Naive thymus-derived CD4-positive, alpha-beta T cell (primary cell): ENCODE measurements at regions of chr19 and their contacts with region 1.

Region 1: GRCh38 chr19:16584248-16585141 is 12.3 kb upstream of the SLC35E1 start:
- DNase-seq: peak; percentile 68 to 93 (median 86)
- ATAC-seq: peak; percentile 89
- H3K4me3 ChIP-seq: peak overlapping the region; percentile 26
- H3K4me3 Mint-ChIP-seq: peak overlapping the region; percentile 70 to 90 (median 78)
- H3K27ac ChIP-seq: peak overlapping the region; percentile 62
- H3K27ac Mint-ChIP-seq: peak overlapping the region; percentile 82 to 95 (median 90)
- H3K4me1 ChIP-seq: peaks cover 65% of the 10 kb centered on the region in 2 donors
- H3K4me1 Mint-ChIP-seq: peaks cover 49 to 90% (median 77%) of the 10 kb centered on the region in 7 donors
- H3K27me3 ChIP-seq: no peaks in the 10 kb centered on the region
- H3K27me3 Mint-ChIP-seq: no peaks in the 10 kb centered on the region

Region 2: DNA sequence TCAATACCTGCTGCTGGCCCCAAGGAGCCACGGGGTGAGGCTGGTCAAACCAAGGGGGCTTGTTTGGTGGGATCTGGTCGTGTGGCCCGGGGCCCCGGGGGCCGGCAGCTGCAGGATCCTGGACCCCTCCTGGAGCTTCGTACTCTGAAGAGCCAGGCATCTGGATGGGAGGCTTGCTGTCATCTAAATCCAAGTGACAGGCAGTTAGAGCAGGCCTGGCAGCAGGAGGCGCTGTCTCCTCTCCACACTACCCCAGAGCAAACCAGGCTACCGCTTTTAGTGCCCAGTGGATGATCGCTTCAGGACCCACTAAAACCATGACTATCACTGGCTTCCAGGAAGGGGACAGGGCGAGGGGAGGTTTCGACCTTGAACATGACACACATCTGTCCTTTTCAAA is 56.4 kb before region 1 on chr19:
- CTCF ChIA-PET with region 1: no interaction called
- POLR2A ChIA-PET with region 1: no interaction called
- intact Hi-C with region 1: loop called in 1 of 2 experiments (anchors 1 kb)
- DNase-seq: peak in 8 of 9 donors; percentile 19 to 54 (median 37)
- ATAC-seq: peak; percentile 77
- H3K4me3 ChIP-seq: no peak overlapping the region
- H3K4me3 Mint-ChIP-seq: no peak overlapping the region
- H3K27ac ChIP-seq: no peak overlapping the region
- H3K27ac Mint-ChIP-seq: peak overlapping the region in 4 of 9 donors; percentile 20 to 42 (median 38)
- H3K4me1 ChIP-seq: no peaks in the 10 kb centered on the region
- H3K4me1 Mint-ChIP-seq: no peaks in the 10 kb centered on the region
- H3K27me3 ChIP-seq: no peaks in the 10 kb centered on the region
- H3K27me3 Mint-ChIP-seq: no peaks in the 10 kb centered on the region

Region 3: GRCh38 chr19:16566161-16566560 is 18.3 kb before region 1 on chr19:
- CTCF ChIA-PET with region 1: interaction called, 4 read pairs
- POLR2A ChIA-PET with region 1: interaction called, 9 read pairs
- intact Hi-C with region 1: loop called (anchors 1 kb)
- DNase-seq: peak in 8 of 9 donors; percentile 46 to 95 (median 92)
- ATAC-seq: peak; percentile 100
- H3K4me3 ChIP-seq: peak overlapping the region; percentile 17
- H3K4me3 Mint-ChIP-seq: peak overlapping the region; percentile 76 to 97 (median 82)
- H3K27ac ChIP-seq: peak overlapping the region; percentile 81
- H3K27ac Mint-ChIP-seq: peak overlapping the region; percentile 92 to 100 (median 98)
- H3K4me1 ChIP-seq: peaks cover 22 to 24% of the 10 kb centered on the region in 2 donors
- H3K4me1 Mint-ChIP-seq: peaks cover 14 to 63% (median 30%) of the 10 kb centered on the region in 7 donors
- H3K27me3 ChIP-seq: no peaks in the 10 kb centered on the region
- H3K27me3 Mint-ChIP-seq: no peaks in the 10 kb centered on the region

Region 4: GRCh38 chr19:16572332-16573211 is 11.9 kb before region 1 on chr19 and contains the start of gene SLC35E1:
- CTCF ChIA-PET with region 1: interaction called, 7 read pairs
- POLR2A ChIA-PET with region 1: interaction called, 26 read pairs
- intact Hi-C with region 1: loop called (anchors 1 kb)
- DNase-seq: peak; percentile 80 to 92 (median 89)
- ATAC-seq: peak; percentile 98
- H3K4me3 ChIP-seq: peak within 1 kb of the TSS; percentile 97
- H3K4me3 Mint-ChIP-seq: peak within 1 kb of the TSS; percentile 97 to 100 (median 99)
- H3K27ac ChIP-seq: peak within 1 kb of the TSS; percentile 95
- H3K27ac Mint-ChIP-seq: peak within 1 kb of the TSS; percentile 94 to 100 (median 99)
- H3K4me1 ChIP-seq: peaks cover 28 to 30% of the 10 kb centered on the region in 2 donors
- H3K4me1 Mint-ChIP-seq: peaks cover 35 to 74% (median 47%) of the 10 kb centered on the region in 7 donors
- H3K27me3 ChIP-seq: no peaks in the 10 kb centered on the region
- H3K27me3 Mint-ChIP-seq: peaks cover 0 to 2% (median 0%) of the 10 kb centered on the region in 5 donors
- total RNA-seq, gene SLC35E1: 33.0 to 67.3 (median 58.7) TPM